IMR-90 (cell line): ENCODE measurements at regions of chr5 and their contacts with region 1.

Region 1: GRCh38 chr5:157511651-157512644 is 51.9 kb downstream of the NIPAL4 start:
- DNase-seq: peak; percentile 98
- ATAC-seq: peak; percentile 88
- H3K4me3 ChIP-seq: no peak overlapping the region
- H3K27ac ChIP-seq: peak overlapping the region; percentile 57
- H3K4me1 ChIP-seq: peaks cover 29% of the 10 kb centered on the region
- H3K27me3 ChIP-seq: no peaks in the 10 kb centered on the region
- CTCF ChIP-seq: no peak
- POLR2A ChIP-seq: no peak
- RAD21 ChIP-seq: 0 out of 2 replicates have a peak, but pooled peaks have one; percentile 1

Region 2: DNA sequence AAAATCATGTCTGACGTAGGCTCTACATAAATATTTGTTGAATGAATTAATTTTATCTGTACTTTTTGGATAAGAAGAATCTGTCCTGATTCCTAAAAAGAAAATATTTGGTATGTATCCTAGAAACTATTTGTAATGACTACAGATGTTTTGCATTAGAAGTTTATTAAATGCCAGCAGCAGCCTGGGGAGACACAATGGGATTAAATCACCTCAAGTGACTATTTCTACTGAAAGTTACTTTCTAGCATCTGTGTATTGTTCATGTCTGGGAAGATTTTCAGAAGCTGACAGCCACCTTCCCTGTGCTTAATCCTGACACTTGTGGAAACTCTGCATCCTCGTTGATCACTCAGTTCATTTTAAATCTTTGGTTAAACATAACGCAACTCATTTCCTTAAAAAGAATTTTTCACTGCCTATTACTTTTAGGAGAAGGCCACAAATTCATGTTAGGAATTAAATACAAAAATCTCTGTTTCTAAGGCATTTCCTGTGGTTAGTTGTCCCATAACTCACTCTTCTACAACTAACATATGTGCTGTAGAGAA is 871.2 kb before region 1 on chr5:
- CTCF ChIA-PET with region 1: no interaction called
- POLR2A ChIA-PET with region 1: no interaction called
- dilution Hi-C with region 1: no loop called
- in situ Hi-C with region 1: no loop called
- intact Hi-C with region 1: no loop called
- DNase-seq: peak; percentile 44
- ATAC-seq: peak; percentile 48
- H3K4me3 ChIP-seq: no peak overlapping the region
- H3K27ac ChIP-seq: no peak overlapping the region; the same call in 1 of the 2 replicates
- H3K4me1 ChIP-seq: peaks cover 5% of the 10 kb centered on the region
- H3K27me3 ChIP-seq: no peaks in the 10 kb centered on the region
- CTCF ChIP-seq: no peak
- POLR2A ChIP-seq: no peak
- RAD21 ChIP-seq: no peak

Region 3: GRCh38 chr5:157030692-157031091 is 481.3 kb before region 1 on chr5:
- CTCF ChIA-PET with region 1: no interaction called
- POLR2A ChIA-PET with region 1: no interaction called
- dilution Hi-C with region 1: no loop called
- in situ Hi-C with region 1: no loop called
- intact Hi-C with region 1: no loop called
- DNase-seq: no peak
- ATAC-seq: no peak
- H3K4me3 ChIP-seq: no peak overlapping the region
- H3K27ac ChIP-seq: no peak overlapping the region
- H3K4me1 ChIP-seq: no peaks in the 10 kb centered on the region
- H3K27me3 ChIP-seq: no peaks in the 10 kb centered on the region
- CTCF ChIP-seq: no peak
- POLR2A ChIP-seq: no peak
- RAD21 ChIP-seq: no peak

Region 4: GRCh38 chr5:157180374-157181264 is 331.3 kb before region 1 on chr5 and contains the start of gene ITK:
- CTCF ChIA-PET with region 1: no interaction called
- POLR2A ChIA-PET with region 1: no interaction called
- dilution Hi-C with region 1: no loop called
- in situ Hi-C with region 1: no loop called
- intact Hi-C with region 1: no loop called
- DNase-seq: no peak
- ATAC-seq: no peak
- H3K4me3 ChIP-seq: no peak within 1 kb of the TSS
- H3K27ac ChIP-seq: no peak within 1 kb of the TSS
- H3K4me1 ChIP-seq: no peaks in the 10 kb centered on the region
- H3K27me3 ChIP-seq: no peaks in the 10 kb centered on the region; the same call in 1 of the 2 replicates
- CTCF ChIP-seq: no peak
- POLR2A ChIP-seq: no peak
- RAD21 ChIP-seq: no peak
- total RNA-seq, gene ITK: not detected in 2 replicates

Region 5: GRCh38 chr5:157459715-157460599 is 52.0 kb before region 1 on chr5 and contains the start of gene NIPAL4:
- CTCF ChIA-PET with region 1: no interaction called
- POLR2A ChIA-PET with region 1: no interaction called
- dilution Hi-C with region 1: no loop called
- in situ Hi-C with region 1: no loop called
- intact Hi-C with region 1: no loop called
- DNase-seq: no peak
- ATAC-seq: peak; percentile 50
- H3K4me3 ChIP-seq: peak within 1 kb of the TSS; percentile 49
- H3K27ac ChIP-seq: no peak within 1 kb of the TSS; the same call in 1 of the 2 replicates
- H3K4me1 ChIP-seq: peaks cover 9% of the 10 kb centered on the region
- H3K27me3 ChIP-seq: peaks cover 5% of the 10 kb centered on the region; the same call in 1 of the 2 replicates
- CTCF ChIP-seq: no peak
- POLR2A ChIP-seq: no peak
- RAD21 ChIP-seq: no peak
- total RNA-seq, gene NIPAL4: 0.18 and 0.28 TPM in 2 replicates

Region 6: GRCh38 chr5:157558041-157558595 is 46.2 kb after region 1 on chr5:
- CTCF ChIA-PET with region 1: no interaction called
- POLR2A ChIA-PET with region 1: no interaction called
- dilution Hi-C with region 1: no loop called
- in situ Hi-C with region 1: no loop called
- intact Hi-C with region 1: loop called (anchors 2 kb)
- DNase-seq: peak; percentile 86
- ATAC-seq: peak; percentile 66
- H3K4me3 ChIP-seq: no peak overlapping the region
- H3K27ac ChIP-seq: peak overlapping the region; percentile 80
- H3K4me1 ChIP-seq: peaks cover 52% of the 10 kb centered on the region
- H3K27me3 ChIP-seq: no peaks in the 10 kb centered on the region
- CTCF ChIP-seq: no peak
- POLR2A ChIP-seq: no peak
- RAD21 ChIP-seq: no peak

Region 7: DNA sequence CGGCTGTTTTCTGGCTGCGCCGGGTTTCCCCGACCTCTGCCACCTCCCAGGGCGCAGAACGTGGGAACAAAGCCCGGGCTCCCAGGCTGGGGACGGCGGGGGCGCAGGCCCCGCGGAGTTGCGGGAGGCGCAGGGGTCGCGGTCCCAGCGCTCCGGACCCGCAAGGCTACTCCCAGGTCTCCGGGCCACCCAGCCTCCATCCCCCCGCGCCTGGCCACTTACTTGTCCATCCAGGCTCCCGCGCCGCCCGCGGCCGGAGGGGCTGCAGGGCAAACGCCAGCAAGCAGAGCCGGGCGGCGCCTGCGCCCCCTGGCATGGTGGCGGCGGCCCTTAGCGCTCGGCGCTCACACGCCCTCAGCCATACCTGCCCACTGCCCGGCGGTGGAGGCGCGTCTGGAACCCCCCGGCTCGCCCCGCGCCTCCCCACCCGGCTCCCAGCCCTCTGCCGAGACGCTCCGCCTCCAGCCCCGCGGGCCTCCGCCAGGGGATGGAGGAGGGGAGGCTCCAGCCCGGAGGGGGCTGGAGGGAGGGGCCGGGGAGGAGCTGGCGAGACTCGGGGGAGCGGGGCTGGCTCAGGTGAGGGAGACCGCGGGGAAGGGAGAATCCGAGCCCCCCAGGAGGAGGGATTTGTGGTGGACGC is 63.6 kb after region 1 on chr5 and contains the start of gene ADAM19:
- CTCF ChIA-PET with region 1: no interaction called
- POLR2A ChIA-PET with region 1: no interaction called
- dilution Hi-C with region 1: no loop called
- in situ Hi-C with region 1: no loop called
- intact Hi-C with region 1: loop called (anchors 2 kb)
- DNase-seq: peak; percentile 53
- ATAC-seq: peak; percentile 84
- H3K4me3 ChIP-seq: peak within 1 kb of the TSS; percentile 80
- H3K27ac ChIP-seq: peak within 1 kb of the TSS; percentile 86
- H3K4me1 ChIP-seq: peaks cover 13% of the 10 kb centered on the region
- H3K27me3 ChIP-seq: no peaks in the 10 kb centered on the region
- CTCF ChIP-seq: no peak
- POLR2A ChIP-seq: peak; percentile 56
- RAD21 ChIP-seq: peak; percentile 3; the same call in 1 of the 2 replicates
- total RNA-seq, gene ADAM19: 35.5 and 38.3 TPM in 2 replicates

Region 8: DNA sequence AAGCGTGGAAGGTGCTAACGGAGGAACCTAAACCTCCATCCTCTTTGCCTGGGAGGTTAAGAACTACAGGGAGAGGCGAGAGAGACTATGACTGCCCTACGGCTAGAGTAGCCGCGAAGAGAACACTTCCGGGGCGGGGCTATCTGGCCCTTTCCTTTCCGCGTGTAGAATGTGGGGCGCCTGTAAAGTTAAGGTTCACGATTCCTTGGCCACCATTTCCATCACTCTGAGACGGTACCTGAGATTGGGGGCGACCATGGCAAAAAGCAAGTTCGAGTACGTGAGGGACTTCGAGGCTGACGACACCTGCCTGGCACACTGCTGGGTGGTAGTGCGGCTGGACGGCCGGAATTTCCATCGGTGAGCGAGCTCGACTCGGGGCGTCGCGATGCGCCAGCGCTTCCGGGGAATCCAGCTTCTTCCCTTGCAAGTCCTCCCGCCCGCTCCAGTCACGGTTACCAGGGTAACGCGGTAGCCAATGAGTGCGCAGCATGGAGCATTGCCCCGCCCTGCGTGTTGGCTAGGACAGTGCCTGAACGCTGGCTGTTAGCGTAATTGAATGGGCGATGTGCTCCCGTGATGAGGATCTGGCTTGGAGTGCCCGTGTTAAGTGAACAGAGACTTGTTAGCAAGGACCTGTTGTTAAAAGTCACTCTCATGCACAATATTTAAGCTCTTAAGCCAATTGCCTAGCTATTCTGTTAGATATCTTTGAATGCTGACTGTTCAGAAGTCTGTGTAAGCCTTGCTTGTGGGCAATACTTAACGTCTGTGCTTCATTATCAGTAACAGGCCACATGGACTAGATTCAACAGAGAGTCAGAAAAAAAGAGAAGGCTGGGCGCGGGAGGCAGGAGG is 219.6 kb after region 1 on chr5 and contains the start of gene THG1L:
- CTCF ChIA-PET with region 1: no interaction called
- POLR2A ChIA-PET with region 1: interaction called, 3 read pairs
- dilution Hi-C with region 1: no loop called
- in situ Hi-C with region 1: no loop called
- intact Hi-C with region 1: loop called (anchors 5 kb)
- DNase-seq: peak; percentile 97
- ATAC-seq: peak; percentile 99
- H3K4me3 ChIP-seq: peak within 1 kb of the TSS; percentile 65
- H3K27ac ChIP-seq: peak within 1 kb of the TSS; percentile 87
- H3K4me1 ChIP-seq: no peaks in the 10 kb centered on the region
- H3K27me3 ChIP-seq: no peaks in the 10 kb centered on the region
- CTCF ChIP-seq: no peak
- POLR2A ChIP-seq: peak; percentile 85
- RAD21 ChIP-seq: no peak
- total RNA-seq, gene THG1L: 20.4 and 32.5 TPM in 2 replicates